Heart left ventricle (tissue), 16 donors: ENCODE measurements at regions of chr21 and their contacts with region 1.

Region 1: DNA sequence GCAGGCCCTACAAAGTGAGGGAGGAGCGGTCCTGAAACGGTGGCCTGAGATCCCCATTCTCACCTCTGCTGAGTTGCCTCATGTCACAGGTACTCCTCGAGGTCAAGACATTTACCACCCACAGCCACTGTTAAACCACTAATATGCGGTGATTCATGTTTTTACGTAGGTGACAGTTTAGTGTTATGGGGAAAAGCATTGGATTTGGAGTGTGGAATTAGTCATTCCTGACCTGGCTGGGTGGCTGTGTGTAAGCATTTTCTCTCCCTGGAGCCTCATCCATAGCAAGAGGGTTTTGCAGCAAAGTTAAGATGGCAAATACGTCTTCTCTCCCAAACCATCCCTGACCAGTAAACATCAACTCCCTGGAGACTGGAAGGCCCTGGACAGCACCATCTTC is 57.8 kb upstream of the KCNJ6 start:
- DNase-seq: no peak
- ATAC-seq: no peak
- H3K4me3 ChIP-seq: no peak overlapping the region
- H3K27ac ChIP-seq: no peak overlapping the region
- H3K4me1 ChIP-seq: peaks cover 0 to 3% (median 0%) of the 10 kb centered on the region in 12 donors
- H3K27me3 ChIP-seq: peaks cover 0 to 43% (median 9%) of the 10 kb centered on the region in 9 donors
- CTCF ChIP-seq: no peak
- POLR2A ChIP-seq: no peak

Region 2: GRCh38 chr21:38067086-38067739 is 93.1 kb after region 1 on chr21:
- intact Hi-C with region 1: loop called in 1 of 10 experiments (anchors 10 kb)
- DNase-seq: no peak
- ATAC-seq: no peak
- H3K4me3 ChIP-seq: no peak overlapping the region
- H3K27ac ChIP-seq: no peak overlapping the region
- H3K4me1 ChIP-seq: no peaks in the 10 kb centered on the region
- H3K27me3 ChIP-seq: peaks cover 0 to 9% (median 0%) of the 10 kb centered on the region in 9 donors
- CTCF ChIP-seq: no peak
- POLR2A ChIP-seq: no peak